ENCODE measurements at regions of chr1 and their contacts with region 1.

Region 1: DNA sequence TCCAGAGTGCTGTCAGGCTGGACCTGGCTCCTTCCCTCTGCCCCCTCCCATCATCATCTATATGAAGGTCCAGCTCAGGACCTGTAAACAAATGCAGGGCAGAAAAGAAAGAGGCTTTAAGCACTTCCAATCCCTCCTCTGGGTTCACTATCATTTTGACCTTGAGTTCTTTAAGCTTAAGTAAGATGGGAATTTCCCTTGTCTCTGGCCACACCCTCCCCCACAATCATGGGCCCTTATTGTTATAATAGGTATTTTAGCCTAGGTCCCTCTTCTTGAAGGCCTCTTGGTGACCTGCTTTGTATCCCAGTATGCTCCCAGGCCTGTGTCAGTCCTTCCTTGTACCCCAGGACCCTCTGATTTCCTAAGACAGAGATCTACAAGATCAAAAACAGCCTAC is 45.1 kb upstream of the EPS15 start:
- DNase-seq: peak in 1 of 2 experiments; percentile 58
- H3K4me3 ChIP-seq: no peak overlapping the region
- H3K27ac ChIP-seq: peak overlapping the region; percentile 34
- H3K4me1 ChIP-seq: peaks cover 87% of the 10 kb centered on the region
- H3K27me3 ChIP-seq: no peaks in the 10 kb centered on the region
- CTCF ChIP-seq: no peak

Region 2: GRCh38 chr1:51535006-51535592 is 29.0 kb before region 1 on chr1:
- CTCF ChIA-PET with region 1: interaction called, 10 read pairs
- POLR2A ChIA-PET with region 1: no interaction called
- intact Hi-C with region 1: loop called (anchors 2 kb)
- DNase-seq: peak; percentile 47 to 54
- H3K4me3 ChIP-seq: no peak overlapping the region
- H3K27ac ChIP-seq: no peak overlapping the region
- H3K4me1 ChIP-seq: peaks cover 12% of the 10 kb centered on the region
- H3K27me3 ChIP-seq: no peaks in the 10 kb centered on the region
- CTCF ChIP-seq: peak; percentile 73